CD8-positive, alpha-beta T cell (primary cell): ENCODE measurements at regions of chr6 and their contacts with region 1.

Region 1: GRCh38 chr6:36874443-36875249 is at the start of gene PPIL1:
- DNase-seq: peak; percentile 72 to 92 (median 85)
- ATAC-seq: peak; percentile 90
- H3K4me3 ChIP-seq: peak within 1 kb of the TSS; percentile 88 to 92
- H3K4me3 Mint-ChIP-seq: peak within 1 kb of the TSS; percentile 100
- H3K27ac ChIP-seq: peak within 1 kb of the TSS; percentile 82 to 87
- H3K27ac Mint-ChIP-seq: peak within 1 kb of the TSS; percentile 100
- H3K4me1 ChIP-seq: peaks cover 16% of the 10 kb centered on the region
- H3K4me1 Mint-ChIP-seq: peaks cover 48% of the 10 kb centered on the region
- H3K27me3 ChIP-seq: peaks cover 0 to 6% of the 10 kb centered on the region in 2 experiments
- H3K27me3 Mint-ChIP-seq: peaks cover 16% of the 10 kb centered on the region
- CTCF ChIP-seq: no peak
- total RNA-seq, gene PPIL1: 2.4 TPM

Region 2: GRCh38 chr6:36765594-36766398 is 108.8 kb before region 1 on chr6:
- CTCF ChIA-PET with region 1: interaction called, 10 read pairs
- POLR2A ChIA-PET with region 1: no interaction called
- intact Hi-C with region 1: no loop called
- DNase-seq: peak; percentile 65 to 87 (median 80)
- ATAC-seq: peak; percentile 95
- H3K4me3 ChIP-seq: no peak overlapping the region
- H3K4me3 Mint-ChIP-seq: no peak overlapping the region
- H3K27ac ChIP-seq: no peak overlapping the region
- H3K27ac Mint-ChIP-seq: no peak overlapping the region
- H3K4me1 ChIP-seq: peaks cover 42% of the 10 kb centered on the region
- H3K4me1 Mint-ChIP-seq: peaks cover 33% of the 10 kb centered on the region
- H3K27me3 ChIP-seq: no peaks in the 10 kb centered on the region
- H3K27me3 Mint-ChIP-seq: no peaks in the 10 kb centered on the region
- CTCF ChIP-seq: peak; percentile 75

Region 3: DNA sequence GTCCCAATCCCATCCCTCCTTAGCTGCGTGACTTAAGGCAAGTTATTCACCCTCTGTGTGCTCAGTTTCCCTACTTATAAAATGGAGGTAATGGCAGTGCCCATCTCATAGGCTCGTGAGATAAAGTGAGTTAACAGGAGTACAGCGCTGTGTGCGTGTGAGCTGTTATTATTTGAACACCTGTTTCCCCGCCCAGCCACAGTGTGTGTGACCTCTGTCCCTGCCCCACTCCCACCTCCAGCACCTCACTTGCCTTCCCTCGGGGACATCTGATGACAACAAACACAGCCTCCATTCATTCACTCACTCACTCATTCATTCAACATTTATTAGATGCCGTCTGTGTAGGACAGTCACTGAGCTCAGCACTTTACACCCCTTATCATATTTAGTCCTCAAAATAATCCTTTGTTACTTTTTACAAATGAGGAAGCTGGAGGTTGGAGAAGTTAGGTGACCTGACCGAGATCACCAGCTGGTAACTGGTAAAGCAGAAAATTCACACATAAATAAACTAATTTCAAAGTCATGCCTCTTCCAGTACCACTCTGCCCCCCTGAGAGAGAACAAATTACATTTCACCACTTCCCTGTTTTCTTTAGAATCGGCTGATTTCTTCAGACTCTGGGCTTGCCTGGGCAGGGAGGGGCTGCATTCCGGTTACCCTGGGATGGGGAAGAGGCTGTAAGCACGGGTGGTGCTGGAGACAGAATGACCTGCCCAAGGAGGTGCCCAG is 94.0 kb before region 1 on chr6:
- CTCF ChIA-PET with region 1: no interaction called
- POLR2A ChIA-PET with region 1: no interaction called
- intact Hi-C with region 1: no loop called
- DNase-seq: no peak
- ATAC-seq: no peak
- H3K4me3 ChIP-seq: no peak overlapping the region
- H3K4me3 Mint-ChIP-seq: no peak overlapping the region
- H3K27ac ChIP-seq: no peak overlapping the region
- H3K27ac Mint-ChIP-seq: peak overlapping the region; percentile 4
- H3K4me1 ChIP-seq: no peaks in the 10 kb centered on the region
- H3K4me1 Mint-ChIP-seq: peaks cover 2% of the 10 kb centered on the region
- H3K27me3 ChIP-seq: no peaks in the 10 kb centered on the region
- H3K27me3 Mint-ChIP-seq: peaks cover 2% of the 10 kb centered on the region
- CTCF ChIP-seq: no peak

Region 4: DNA sequence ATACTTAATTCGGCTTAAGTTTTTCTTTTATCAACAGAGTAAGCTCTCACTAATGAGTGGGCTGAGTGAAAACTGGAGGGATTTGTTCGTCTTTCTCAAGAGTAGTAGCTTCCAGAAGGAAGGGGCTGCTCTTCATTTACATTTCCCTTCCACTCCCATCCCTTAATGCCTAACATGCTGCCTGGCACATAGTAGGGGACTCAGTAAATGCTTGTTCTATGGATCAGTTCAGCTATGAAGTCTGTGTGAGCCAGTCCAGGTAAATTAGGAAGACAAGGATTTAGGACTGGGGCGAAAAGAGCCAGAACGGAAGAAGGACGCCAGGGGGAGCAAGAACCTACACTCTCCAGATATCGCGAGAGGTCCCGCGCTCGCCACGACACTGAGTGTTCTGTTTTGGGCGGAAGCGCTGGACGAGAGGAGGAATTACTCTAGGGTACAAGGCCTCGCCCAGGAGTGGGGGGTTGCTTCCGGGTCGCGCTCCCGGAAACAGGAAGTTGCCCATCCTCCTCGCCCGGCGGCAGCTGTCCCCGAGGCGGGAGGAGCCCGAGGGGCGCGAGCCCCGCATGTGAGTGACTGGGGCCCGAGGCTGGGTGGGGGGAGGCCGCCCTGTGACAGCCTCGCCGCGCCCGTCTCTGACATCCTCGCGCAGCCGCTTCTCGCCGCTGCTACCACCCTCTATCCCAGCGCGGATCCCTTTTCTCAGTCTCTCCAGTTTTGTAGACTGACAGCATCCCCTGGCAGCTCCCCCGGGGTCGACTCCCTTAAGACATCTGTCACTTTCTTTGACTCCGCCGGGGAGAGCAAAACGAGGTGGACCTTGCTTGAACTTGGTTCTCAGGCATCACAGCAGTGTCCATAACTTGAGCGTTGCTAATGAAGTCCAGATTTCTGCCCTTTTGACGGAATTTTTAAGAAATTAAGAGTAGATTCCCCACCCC is 11.1 kb after region 1 on chr6 and contains the start of gene C6orf89:
- CTCF ChIA-PET with region 1: interaction called, 64 read pairs
- POLR2A ChIA-PET with region 1: interaction called, 31 read pairs
- intact Hi-C with region 1: loop called (anchors 1 kb)
- DNase-seq: peak; percentile 91 to 99 (median 97)
- ATAC-seq: peak; percentile 98
- H3K4me3 ChIP-seq: peak within 1 kb of the TSS; percentile 75 to 78
- H3K4me3 Mint-ChIP-seq: peak within 1 kb of the TSS; percentile 91
- H3K27ac ChIP-seq: peak within 1 kb of the TSS; percentile 63 to 91
- H3K27ac Mint-ChIP-seq: peak within 1 kb of the TSS; percentile 94
- H3K4me1 ChIP-seq: peaks cover 14% of the 10 kb centered on the region
- H3K4me1 Mint-ChIP-seq: peaks cover 38% of the 10 kb centered on the region
- H3K27me3 ChIP-seq: no peaks in the 10 kb centered on the region
- H3K27me3 Mint-ChIP-seq: no peaks in the 10 kb centered on the region
- CTCF ChIP-seq: peak; percentile 81
- total RNA-seq, gene C6orf89: 22.2 TPM

Region 5: GRCh38 chr6:37036146-37036545 is 161.5 kb after region 1 on chr6:
- CTCF ChIA-PET with region 1: no interaction called
- POLR2A ChIA-PET with region 1: no interaction called
- intact Hi-C with region 1: no loop called
- DNase-seq: no peak
- ATAC-seq: no peak
- H3K4me3 ChIP-seq: no peak overlapping the region
- H3K4me3 Mint-ChIP-seq: no peak overlapping the region
- H3K27ac ChIP-seq: no peak overlapping the region
- H3K27ac Mint-ChIP-seq: no peak overlapping the region
- H3K4me1 ChIP-seq: no peaks in the 10 kb centered on the region
- H3K4me1 Mint-ChIP-seq: peaks cover 8% of the 10 kb centered on the region
- H3K27me3 ChIP-seq: no peaks in the 10 kb centered on the region
- H3K27me3 Mint-ChIP-seq: no peaks in the 10 kb centered on the region
- CTCF ChIP-seq: no peak

Region 6: GRCh38 chr6:37257634-37258404 is 383.2 kb after region 1 on chr6 and contains the starts of genes TBC1D22B and TMEM217:
- CTCF ChIA-PET with region 1: no interaction called
- POLR2A ChIA-PET with region 1: no interaction called
- intact Hi-C with region 1: loop called (anchors 1 to 5 kb)
- DNase-seq: peak; percentile 89 to 97 (median 95)
- ATAC-seq: peak; percentile 99
- H3K4me3 ChIP-seq: peak within 1 kb of the TSS; percentile 93 to 100
- H3K4me3 Mint-ChIP-seq: peak within 1 kb of the TSS; percentile 92
- H3K27ac ChIP-seq: peak within 1 kb of the TSS; percentile 74 to 94
- H3K27ac Mint-ChIP-seq: peak within 1 kb of the TSS; percentile 85
- H3K4me1 ChIP-seq: peaks cover 24% of the 10 kb centered on the region
- H3K4me1 Mint-ChIP-seq: peaks cover 40% of the 10 kb centered on the region
- H3K27me3 ChIP-seq: no peaks in the 10 kb centered on the region
- H3K27me3 Mint-ChIP-seq: no peaks in the 10 kb centered on the region
- CTCF ChIP-seq: no peak
- total RNA-seq, gene TBC1D22B: 6.7 to 6.8 TPM
- total RNA-seq, gene TMEM217: 0.27 to 1.2 TPM